ENCODE measurements at regions of chr3 and their contacts with region 1.

Region 1: DNA sequence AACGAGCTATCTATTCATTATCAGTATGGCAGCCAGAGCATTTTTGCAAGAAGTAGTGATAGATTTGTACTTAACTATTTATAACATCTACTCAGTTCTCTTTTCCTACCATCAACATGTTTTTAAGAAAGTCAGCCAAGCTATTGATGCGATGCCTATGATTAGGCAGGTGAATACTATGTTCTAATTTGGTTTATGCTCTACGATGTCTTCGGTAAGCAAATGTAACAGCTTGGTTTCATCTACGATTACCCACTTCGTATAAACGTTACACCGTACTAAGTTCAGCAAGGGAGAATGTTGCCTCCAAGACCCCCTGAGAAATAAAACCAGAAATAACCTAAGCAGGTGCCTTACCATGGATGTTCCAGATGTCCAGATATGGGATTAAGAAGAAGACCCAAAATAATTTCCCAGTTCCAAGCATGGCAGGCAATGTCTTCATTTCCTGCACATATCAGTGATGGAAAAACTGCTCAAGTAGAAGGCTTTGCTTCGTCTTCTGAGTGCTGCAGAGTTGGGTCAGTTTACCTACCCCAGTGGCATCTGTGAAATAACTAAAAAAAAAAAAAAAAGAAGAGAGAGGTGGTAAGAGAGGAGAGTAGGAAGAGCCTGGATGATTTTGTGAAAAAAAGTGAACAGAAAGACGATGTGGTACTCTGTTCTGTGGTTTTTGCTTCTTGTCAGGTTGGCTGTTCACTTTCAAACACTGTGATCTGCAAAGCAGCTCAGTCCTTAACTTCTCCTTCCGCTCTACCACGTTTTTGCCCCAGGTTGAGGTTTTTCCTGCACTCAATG is at the start of gene BTLA:
- DNase-seq: peak; percentile 78
- ATAC-seq: peak; percentile 71
- H3K4me3 ChIP-seq: peak within 1 kb of the TSS; percentile 66 to 96 (median 82)
- H3K4me3 Mint-ChIP-seq: peak within 1 kb of the TSS; percentile 94
- H3K27ac ChIP-seq: peak within 1 kb of the TSS; percentile 92 to 96
- H3K27ac Mint-ChIP-seq: peak within 1 kb of the TSS; percentile 97
- H3K4me1 ChIP-seq: peaks cover 47 to 53% of the 10 kb centered on the region in 2 donors
- H3K4me1 Mint-ChIP-seq: peaks cover 69% of the 10 kb centered on the region
- H3K27me3 ChIP-seq: no peaks in the 10 kb centered on the region
- H3K27me3 Mint-ChIP-seq: no peaks in the 10 kb centered on the region
- CTCF ChIP-seq: no peak
- total RNA-seq, gene BTLA: 91.6 and 101 TPM in 2 replicates

Region 2: DNA sequence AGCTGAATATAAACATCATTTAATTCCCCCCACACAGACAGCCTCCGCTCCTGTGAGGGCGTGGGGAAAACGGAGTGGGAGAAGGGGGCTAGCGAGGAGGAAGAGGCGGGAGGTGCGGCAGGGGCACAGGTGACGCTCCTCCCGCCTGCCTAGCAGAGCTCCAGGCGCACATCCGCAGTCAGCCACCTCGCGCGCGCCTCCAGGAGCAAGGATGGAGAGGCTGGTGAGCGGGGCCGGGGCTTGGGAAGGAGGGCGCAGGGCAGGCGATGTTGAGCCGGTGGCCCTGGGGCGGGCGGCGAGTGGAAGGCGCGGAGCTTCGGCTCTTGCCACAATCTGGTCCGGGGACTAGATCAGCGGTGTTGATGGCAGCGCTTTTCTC is 166.1 kb before region 1 on chr3 and contains the start of gene CD200:
- CTCF ChIA-PET with region 1: interaction called, 22 read pairs
- POLR2A ChIA-PET with region 1: interaction called, 26 read pairs
- intact Hi-C with region 1: no loop called
- DNase-seq: peak; percentile 64
- ATAC-seq: peak; percentile 77
- H3K4me3 ChIP-seq: peak within 1 kb of the TSS; percentile 65 to 93 (median 89)
- H3K4me3 Mint-ChIP-seq: peak within 1 kb of the TSS; percentile 94
- H3K27ac ChIP-seq: peak within 1 kb of the TSS; percentile 70 to 83
- H3K27ac Mint-ChIP-seq: peak within 1 kb of the TSS; percentile 95
- H3K4me1 ChIP-seq: peaks cover 29 to 31% of the 10 kb centered on the region in 2 donors
- H3K4me1 Mint-ChIP-seq: peaks cover 50% of the 10 kb centered on the region
- H3K27me3 ChIP-seq: no peaks in the 10 kb centered on the region
- H3K27me3 Mint-ChIP-seq: no peaks in the 10 kb centered on the region
- CTCF ChIP-seq: no peak
- total RNA-seq, gene CD200: 35.0 and 36.0 TPM in 2 replicates

Region 3: DNA sequence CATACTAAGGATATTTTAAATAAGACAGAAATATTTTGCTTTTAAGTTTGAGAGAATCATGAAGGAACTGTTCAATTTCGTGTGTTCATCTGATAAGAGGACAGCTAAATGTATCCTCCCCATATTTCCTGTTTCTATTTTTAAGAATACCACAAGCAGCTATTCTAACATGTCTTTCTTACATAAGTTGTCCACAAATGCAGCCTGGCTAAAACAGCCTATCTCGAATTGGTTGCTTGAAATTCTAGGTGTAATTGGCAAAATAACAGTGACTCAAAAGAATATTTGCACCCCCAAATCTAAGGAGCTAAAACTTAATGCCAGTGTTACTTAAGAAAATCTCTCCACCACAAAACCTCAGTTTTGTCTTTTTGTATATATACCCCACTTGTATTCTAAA is 34.8 kb before region 1 on chr3:
- CTCF ChIA-PET with region 1: interaction called, 7 read pairs
- POLR2A ChIA-PET with region 1: interaction called, 9 read pairs
- intact Hi-C with region 1: loop called (anchors 2 kb)
- DNase-seq: peak; percentile 60
- ATAC-seq: peak; percentile 76
- H3K4me3 ChIP-seq: peak overlapping the region in 1 of 5 experiments; percentile 53
- H3K4me3 Mint-ChIP-seq: peak overlapping the region; percentile 67
- H3K27ac ChIP-seq: peak overlapping the region; percentile 64 to 80
- H3K27ac Mint-ChIP-seq: peak overlapping the region; percentile 81
- H3K4me1 ChIP-seq: peaks cover 81 to 86% of the 10 kb centered on the region in 2 donors
- H3K4me1 Mint-ChIP-seq: peaks cover 86% of the 10 kb centered on the region
- H3K27me3 ChIP-seq: no peaks in the 10 kb centered on the region
- H3K27me3 Mint-ChIP-seq: no peaks in the 10 kb centered on the region
- CTCF ChIP-seq: no peak

Region 4: GRCh38 chr3:112473212-112473640 is 25.9 kb before region 1 on chr3:
- CTCF ChIA-PET with region 1: interaction called, 9 read pairs
- POLR2A ChIA-PET with region 1: interaction called, 5 read pairs
- intact Hi-C with region 1: loop called (anchors 1 kb)
- DNase-seq: peak; percentile 80
- ATAC-seq: peak; percentile 87
- H3K4me3 ChIP-seq: peak overlapping the region in 2 of 5 experiments; percentile 36 to 41
- H3K4me3 Mint-ChIP-seq: peak overlapping the region; percentile 84
- H3K27ac ChIP-seq: peak overlapping the region; percentile 66
- H3K27ac Mint-ChIP-seq: peak overlapping the region; percentile 96
- H3K4me1 ChIP-seq: peaks cover 76 to 80% of the 10 kb centered on the region in 2 donors
- H3K4me1 Mint-ChIP-seq: peaks cover 81% of the 10 kb centered on the region
- H3K27me3 ChIP-seq: no peaks in the 10 kb centered on the region
- H3K27me3 Mint-ChIP-seq: no peaks in the 10 kb centered on the region
- CTCF ChIP-seq: no peak

Region 5: DNA sequence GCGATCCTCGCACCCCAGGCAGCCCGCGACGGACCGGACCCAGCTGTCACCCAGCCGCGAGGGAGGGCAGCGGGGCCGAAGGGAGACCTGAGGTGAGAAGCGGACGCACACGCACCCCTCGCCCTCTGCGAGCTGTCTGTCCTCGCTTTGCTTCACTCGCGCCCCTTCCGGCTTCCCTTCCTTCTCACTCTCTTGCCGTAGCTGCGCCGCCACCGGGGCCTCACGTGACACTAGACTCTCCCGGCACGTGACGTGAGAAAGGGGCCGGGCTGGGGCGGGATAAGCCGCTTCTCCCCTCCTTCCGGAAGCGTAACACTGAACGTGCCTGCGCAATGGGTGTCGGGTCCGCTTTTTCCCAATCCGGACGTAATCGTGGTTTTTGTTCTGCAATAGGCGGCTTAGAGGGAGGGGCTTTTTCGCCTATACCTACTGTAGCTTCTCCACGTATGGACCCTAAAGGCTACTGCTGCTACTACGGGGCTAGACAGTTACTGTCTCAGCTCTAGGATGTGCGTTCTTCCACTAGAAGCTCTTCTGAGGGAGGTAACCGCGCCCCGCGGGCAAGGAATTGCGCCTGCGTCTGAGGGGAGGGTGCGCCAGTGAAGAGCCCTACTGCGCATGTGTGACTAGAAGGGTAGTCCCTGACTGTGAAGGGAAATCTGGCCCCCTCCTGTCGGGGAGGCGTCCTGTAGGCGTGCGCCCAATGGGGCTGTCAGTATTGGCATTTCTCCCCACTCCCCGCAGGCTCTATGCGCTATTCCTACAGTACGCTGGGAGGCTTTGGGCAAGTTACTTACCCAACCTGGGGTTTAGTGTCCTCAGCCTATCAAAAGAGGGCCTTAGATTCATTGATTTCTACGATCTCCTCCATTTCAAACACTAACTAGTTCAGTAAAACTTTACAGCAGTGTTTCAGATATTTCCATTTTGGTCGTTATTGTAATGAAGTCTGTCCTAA is 62.9 kb after region 1 on chr3 and contains the starts of genes ATG3 and SLC35A5:
- CTCF ChIA-PET with region 1: no interaction called
- POLR2A ChIA-PET with region 1: interaction called, 18 read pairs
- intact Hi-C with region 1: loop called (anchors 1 kb)
- DNase-seq: peak; percentile 99
- ATAC-seq: peak; percentile 79
- H3K4me3 ChIP-seq: peak within 1 kb of the TSS; percentile 75 to 99 (median 94)
- H3K4me3 Mint-ChIP-seq: peak within 1 kb of the TSS; percentile 99
- H3K27ac ChIP-seq: peak within 1 kb of the TSS; percentile 93 to 96
- H3K27ac Mint-ChIP-seq: peak within 1 kb of the TSS; percentile 100
- H3K4me1 ChIP-seq: peaks cover 23 to 34% of the 10 kb centered on the region in 2 donors
- H3K4me1 Mint-ChIP-seq: peaks cover 50% of the 10 kb centered on the region
- H3K27me3 ChIP-seq: no peaks in the 10 kb centered on the region
- H3K27me3 Mint-ChIP-seq: no peaks in the 10 kb centered on the region
- CTCF ChIP-seq: no peak
- total RNA-seq, gene ATG3: 48.8 and 54.9 TPM in 2 replicates
- total RNA-seq, gene SLC35A5: 32.1 and 34.9 TPM in 2 replicates